ENCODE measurements at regions of chr18 and their contacts with region 1.

Region 1: DNA sequence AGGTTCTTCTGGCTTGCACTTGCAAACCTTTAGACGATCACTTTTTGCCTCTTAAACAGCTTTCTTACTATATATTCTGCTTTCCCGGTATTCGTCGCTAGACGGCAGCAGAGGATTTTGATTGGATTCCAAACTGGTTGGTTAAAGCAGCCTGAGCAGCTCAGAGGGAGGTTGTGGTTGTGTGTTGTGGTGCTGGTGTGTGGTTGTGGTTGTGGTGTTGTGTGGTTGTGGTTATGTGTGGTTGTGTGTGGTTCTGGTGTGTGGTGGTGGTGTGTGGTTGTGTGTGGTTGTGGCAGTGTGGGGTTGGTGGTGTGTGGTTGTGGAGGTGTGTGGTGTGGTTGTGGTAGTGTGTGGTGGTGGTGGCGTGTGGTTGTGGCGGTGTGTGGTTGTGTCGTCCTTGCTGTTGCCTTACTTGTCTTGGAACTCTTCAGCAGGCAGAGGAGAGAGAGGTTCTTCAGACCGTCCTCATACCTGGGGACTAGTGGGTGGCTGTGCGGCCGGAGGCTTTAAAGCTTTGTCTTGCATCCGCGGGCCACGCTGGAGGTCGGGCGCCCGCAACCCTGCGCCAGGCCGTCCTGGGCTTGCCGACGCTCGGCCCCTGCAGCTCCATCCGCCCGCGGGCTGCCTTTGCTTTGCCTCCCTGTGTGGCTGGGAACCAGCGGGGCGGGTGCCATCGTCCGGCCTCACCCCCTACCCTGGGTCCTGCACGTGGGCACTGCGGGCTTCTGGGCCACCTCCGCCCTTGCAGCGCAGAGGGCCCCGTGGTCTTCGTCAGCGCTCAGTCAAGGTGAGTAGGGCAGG is 190.8 kb downstream of the ARHGAP28 start:
- DNase-seq: no peak
- ATAC-seq: peak; percentile 50
- H3K4me3 ChIP-seq: no peak overlapping the region
- H3K27ac ChIP-seq: no peak overlapping the region
- H3K4me1 ChIP-seq: no peaks in the 10 kb centered on the region
- H3K27me3 ChIP-seq: no peaks in the 10 kb centered on the region

Region 2: GRCh38 chr18:6561420-6561861 is 358.9 kb before region 1 on chr18:
- intact Hi-C with region 1: no loop called
- DNase-seq: no peak
- ATAC-seq: peak; percentile 66
- H3K4me3 ChIP-seq: no peak overlapping the region
- H3K27ac ChIP-seq: no peak overlapping the region
- H3K4me1 ChIP-seq: no peaks in the 10 kb centered on the region
- H3K27me3 ChIP-seq: peaks cover 0 to 1% of the 10 kb centered on the region in 2 donors

Region 3: DNA sequence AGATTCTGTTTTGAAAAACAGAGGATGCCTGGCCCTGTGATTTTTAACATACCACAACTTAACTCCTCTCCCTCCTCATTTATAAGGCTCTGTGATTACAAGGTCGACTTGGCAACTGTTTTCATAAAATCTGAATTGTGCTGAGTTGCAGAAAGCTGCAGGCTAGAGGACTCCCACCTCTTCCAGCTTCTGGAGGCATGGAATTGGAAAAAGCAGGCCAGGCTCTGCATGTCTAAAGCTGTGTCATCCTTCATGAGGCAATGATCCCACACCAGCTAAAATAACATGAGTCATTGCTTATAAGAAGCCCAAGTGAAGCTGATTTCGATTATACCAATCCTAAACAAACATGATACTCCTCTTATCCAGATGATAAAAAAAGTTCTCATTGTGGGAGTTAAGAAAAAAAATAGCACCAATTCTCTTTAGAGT is 179.1 kb before region 1 on chr18:
- intact Hi-C with region 1: no loop called
- DNase-seq: peak in 1 of 2 donors; percentile 49
- ATAC-seq: peak; percentile 87
- H3K4me3 ChIP-seq: no peak overlapping the region
- H3K27ac ChIP-seq: no peak overlapping the region
- H3K4me1 ChIP-seq: no peaks in the 10 kb centered on the region
- H3K27me3 ChIP-seq: no peaks in the 10 kb centered on the region

Region 4: DNA sequence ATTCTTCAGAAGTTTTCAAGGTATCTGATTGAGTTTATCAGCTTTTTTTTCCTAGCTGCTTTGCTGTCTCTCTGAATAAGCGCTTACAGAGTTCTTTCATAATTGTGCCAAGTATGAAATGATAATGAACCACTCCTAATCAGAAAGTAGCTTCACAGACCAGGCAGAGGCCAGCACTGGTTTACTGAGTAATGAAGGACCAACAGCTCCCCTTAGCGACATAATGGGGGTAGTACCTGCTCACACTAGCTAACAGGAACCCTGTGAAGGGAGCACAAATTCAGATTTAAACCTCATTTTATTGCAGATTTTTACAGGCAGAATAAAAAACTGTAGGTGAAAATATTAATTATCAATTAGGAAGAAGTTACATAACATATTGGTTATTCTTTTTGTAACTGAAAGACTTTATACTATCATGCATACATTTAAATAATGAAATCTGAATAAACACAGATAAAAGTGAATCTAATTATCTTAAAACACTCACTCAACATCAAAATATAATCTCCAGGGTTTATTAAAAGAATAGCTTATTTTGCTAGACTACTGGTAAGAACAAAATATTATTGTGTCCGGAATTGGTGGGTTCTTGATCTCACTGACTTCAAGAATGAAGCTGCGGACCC is 256.9 kb after region 1 on chr18:
- intact Hi-C with region 1: loop called (anchors 2 to 5 kb)
- DNase-seq: no peak
- ATAC-seq: peak; percentile 78
- H3K4me3 ChIP-seq: no peak overlapping the region
- H3K27ac ChIP-seq: no peak overlapping the region
- H3K4me1 ChIP-seq: no peaks in the 10 kb centered on the region
- H3K27me3 ChIP-seq: no peaks in the 10 kb centered on the region

Measured in aorta (tissue), 5 donors.